T-cell (primary cell): ENCODE measurements at regions of chr2 and their contacts with region 1.

Region 1: DNA sequence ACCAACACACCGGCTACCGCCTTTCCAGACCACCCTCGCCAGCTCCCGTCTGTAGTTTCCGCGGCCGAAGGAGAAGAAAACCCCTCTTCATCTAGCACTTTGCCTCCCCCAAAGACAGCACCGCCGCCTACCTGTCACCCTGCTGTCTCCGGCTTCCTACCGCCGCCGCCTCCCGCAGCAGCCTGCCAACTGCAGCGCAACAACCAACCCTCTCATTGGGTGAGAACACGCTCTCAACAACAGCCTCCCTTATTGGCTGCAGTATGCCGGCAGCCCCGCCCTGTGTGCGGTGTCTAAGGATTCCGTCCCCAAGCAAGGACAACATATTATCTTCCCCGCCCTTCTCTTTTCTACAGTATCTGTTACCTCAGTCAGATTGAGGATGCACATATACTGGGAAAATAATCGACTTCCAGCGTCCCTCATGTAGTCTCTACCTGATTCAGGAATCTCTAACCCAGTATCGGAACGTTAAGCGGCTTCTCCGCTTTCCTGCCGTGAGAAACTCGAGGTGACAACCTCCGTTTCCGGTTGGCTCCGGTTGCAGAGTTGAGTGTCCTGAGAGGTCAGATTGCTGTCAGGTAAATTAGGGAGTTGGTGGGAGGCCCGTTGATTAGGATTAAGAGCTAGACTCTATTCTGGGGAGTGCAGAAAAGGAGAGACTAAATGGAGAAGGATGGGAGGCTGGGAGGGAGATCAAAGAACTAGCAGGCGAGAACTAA is at the starts of genes HYCC2 and NDUFB3:
- DNase-seq: peak; percentile 80 to 98 (median 92)
- ATAC-seq: peak; percentile 96 to 98 (median 96)
- H3K4me3 ChIP-seq: peak within 1 kb of the TSS; percentile 71 to 96
- H3K4me3 Mint-ChIP-seq: peak within 1 kb of the TSS; percentile 92 to 95 (median 94)
- H3K27ac ChIP-seq: peak within 1 kb of the TSS; percentile 65
- H3K27ac Mint-ChIP-seq: peak within 1 kb of the TSS; percentile 91 to 96
- H3K4me1 ChIP-seq: peaks cover 10 to 28% of the 10 kb centered on the region in 2 experiments
- H3K4me1 Mint-ChIP-seq: peaks cover 55 to 60% (median 58%) of the 10 kb centered on the region in 3 donors
- H3K27me3 ChIP-seq: no peaks in the 10 kb centered on the region
- H3K27me3 Mint-ChIP-seq: no peaks in the 10 kb centered on the region
- total RNA-seq, gene HYCC2: 29.5 to 44.6 (median 36.0) TPM
- total RNA-seq, gene NDUFB3: 31.4 to 43.7 (median 38.8) TPM

Region 2: GRCh38 chr2:200850512-200851256 is 221.0 kb before region 1 on chr2:
- CTCF ChIA-PET with region 1: interaction called in 1 of 2 experiments, 3 read pairs
- POLR2A ChIA-PET with region 1: interaction called in 1 of 2 experiments, 10 read pairs
- DNase-seq: no peak
- ATAC-seq: no peak
- H3K4me3 ChIP-seq: no peak overlapping the region
- H3K4me3 Mint-ChIP-seq: peak overlapping the region in 1 of 3 donors; percentile 31
- H3K27ac ChIP-seq: no peak overlapping the region
- H3K27ac Mint-ChIP-seq: peak overlapping the region; percentile 16 to 27
- H3K4me1 ChIP-seq: peaks cover 0 to 6% of the 10 kb centered on the region in 2 experiments
- H3K4me1 Mint-ChIP-seq: peaks cover 6 to 23% (median 11%) of the 10 kb centered on the region in 3 donors
- H3K27me3 ChIP-seq: no peaks in the 10 kb centered on the region
- H3K27me3 Mint-ChIP-seq: no peaks in the 10 kb centered on the region

Region 3: DNA sequence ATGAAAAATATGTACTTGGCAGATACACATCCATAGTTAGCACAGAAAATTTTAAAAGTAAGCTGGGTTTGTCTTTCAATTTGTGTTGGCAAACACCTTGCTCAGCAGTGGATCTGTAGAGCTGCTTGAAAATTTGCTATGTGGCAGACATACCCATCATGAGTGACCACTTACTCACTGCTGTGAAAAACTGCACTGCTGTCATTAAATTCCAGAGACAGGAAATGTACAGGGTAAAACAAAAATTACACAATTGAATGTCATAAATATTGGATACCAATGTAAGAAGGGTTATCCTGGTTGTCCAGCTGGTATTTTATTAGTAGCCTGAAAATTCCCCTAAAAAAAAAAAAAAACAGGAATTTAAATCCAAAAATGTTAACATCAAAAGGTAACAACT is 158.0 kb before region 1 on chr2:
- CTCF ChIA-PET with region 1: interaction called, 3 to 5 read pairs
- POLR2A ChIA-PET with region 1: interaction called in 1 of 2 experiments, 11 read pairs
- DNase-seq: no peak
- ATAC-seq: no peak
- H3K4me3 ChIP-seq: no peak overlapping the region
- H3K4me3 Mint-ChIP-seq: no peak overlapping the region
- H3K27ac ChIP-seq: no peak overlapping the region
- H3K27ac Mint-ChIP-seq: peak overlapping the region in 1 of 2 donors; percentile 29
- H3K4me1 ChIP-seq: no peaks in the 10 kb centered on the region
- H3K4me1 Mint-ChIP-seq: no peaks in the 10 kb centered on the region
- H3K27me3 ChIP-seq: no peaks in the 10 kb centered on the region
- H3K27me3 Mint-ChIP-seq: no peaks in the 10 kb centered on the region

Region 4: DNA sequence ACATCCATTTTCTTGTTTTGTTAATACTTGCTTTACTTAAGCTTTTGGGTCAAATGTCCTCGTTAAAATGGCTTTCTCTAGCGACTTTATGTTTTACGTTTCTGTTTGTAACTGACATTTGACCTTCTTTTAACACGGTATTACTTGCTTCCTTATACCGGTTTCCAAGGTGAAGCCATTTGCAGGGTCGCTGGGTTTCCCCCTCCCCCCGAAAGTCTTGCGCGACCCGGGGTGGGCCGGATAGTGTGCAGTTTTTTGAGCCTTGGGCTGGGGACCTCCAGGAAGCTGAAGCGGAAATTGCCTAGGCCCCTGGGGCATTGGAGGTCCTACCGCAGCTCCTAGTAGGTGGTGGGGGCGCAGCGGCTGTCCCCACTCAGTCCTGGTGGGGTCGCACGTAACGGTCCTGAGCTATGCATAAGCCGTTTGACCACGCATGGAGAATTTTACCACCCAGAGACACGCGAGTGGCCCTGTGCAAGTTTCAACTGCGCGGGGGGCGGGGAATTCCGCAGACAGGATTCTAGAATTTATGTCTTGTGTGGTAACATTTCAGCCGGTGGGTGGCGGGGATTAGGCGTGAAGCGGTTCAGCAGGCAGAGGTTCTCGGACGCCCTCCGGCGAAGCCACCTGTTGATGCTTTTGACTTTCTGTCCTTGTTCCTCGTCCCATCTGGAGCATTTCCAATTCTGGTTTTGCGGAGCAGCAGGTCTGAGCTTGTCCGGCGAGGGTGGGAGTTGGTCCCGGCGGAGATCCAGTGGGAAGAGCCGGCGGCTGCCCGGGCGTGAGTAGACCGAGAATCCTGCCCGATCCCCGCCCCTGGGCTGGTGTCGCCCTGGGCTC is 46.7 kb after region 1 on chr2:
- CTCF ChIA-PET with region 1: interaction called, 5 to 15 read pairs
- POLR2A ChIA-PET with region 1: interaction called in 1 of 2 experiments, 3 read pairs
- DNase-seq: peak; percentile 65 to 92 (median 84)
- ATAC-seq: peak; percentile 41 to 60 (median 50)
- H3K4me3 ChIP-seq: peak overlapping the region; percentile 84 to 92
- H3K4me3 Mint-ChIP-seq: peak overlapping the region; percentile 97 to 98 (median 98)
- H3K27ac ChIP-seq: peak overlapping the region; percentile 97
- H3K27ac Mint-ChIP-seq: peak overlapping the region; percentile 99
- H3K4me1 ChIP-seq: peaks cover 38 to 50% of the 10 kb centered on the region in 2 experiments
- H3K4me1 Mint-ChIP-seq: peaks cover 57 to 82% (median 58%) of the 10 kb centered on the region in 3 donors
- H3K27me3 ChIP-seq: no peaks in the 10 kb centered on the region
- H3K27me3 Mint-ChIP-seq: no peaks in the 10 kb centered on the region